Activated CD4-positive, alpha-beta T cell treated with anti-CD3 and anti-CD28 coated beads for 36 hours (primary cell): ENCODE measurements at regions of chr11 and their contacts with region 1.

Region 1: DNA sequence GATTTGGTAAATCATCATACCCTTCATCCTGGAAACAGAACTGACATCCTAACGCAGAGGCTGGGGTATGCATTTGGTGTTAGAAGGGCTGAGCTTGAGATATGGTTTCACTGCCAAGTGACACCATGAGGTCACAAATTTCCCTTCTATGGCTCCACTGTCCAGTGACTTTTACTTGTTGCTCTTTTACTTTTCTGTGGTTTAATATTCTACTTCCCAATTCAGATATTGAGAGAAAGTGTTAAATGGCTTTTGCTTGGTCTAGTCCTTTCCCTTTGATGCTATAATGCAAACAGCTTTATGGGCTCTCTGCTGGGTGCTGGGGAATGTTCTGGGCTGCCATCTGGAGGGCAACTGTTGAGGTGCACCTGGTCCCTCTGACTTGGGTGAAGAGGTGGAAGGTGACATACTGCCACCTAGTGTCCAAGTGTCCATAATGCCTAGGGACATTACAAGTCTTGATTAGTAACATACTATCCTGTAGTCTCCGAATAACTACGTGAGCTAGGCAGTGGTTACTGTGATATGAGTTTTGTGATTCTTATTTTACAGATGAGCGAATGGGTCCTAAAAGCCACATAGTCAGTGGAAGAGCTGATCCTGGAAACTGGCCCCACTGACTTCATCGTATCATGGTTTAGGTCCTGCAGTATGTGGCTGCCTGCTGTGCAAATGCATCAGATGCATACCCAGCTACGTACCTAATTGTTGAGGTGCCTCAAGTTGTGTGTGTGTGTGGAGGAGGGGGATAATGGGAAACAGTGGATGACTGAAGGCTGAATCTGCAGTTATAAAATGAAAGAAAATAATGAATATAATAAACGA is 149.1 kb upstream of the RAG2 start:
- DNase-seq: peak; percentile 90
- ATAC-seq: peak; percentile 99
- H3K4me3 Mint-ChIP-seq: no peak overlapping the region
- H3K27ac Mint-ChIP-seq: no peak overlapping the region
- H3K4me1 Mint-ChIP-seq: peaks cover 8% of the 10 kb centered on the region
- H3K27me3 Mint-ChIP-seq: peaks cover 27% of the 10 kb centered on the region

Region 2: DNA sequence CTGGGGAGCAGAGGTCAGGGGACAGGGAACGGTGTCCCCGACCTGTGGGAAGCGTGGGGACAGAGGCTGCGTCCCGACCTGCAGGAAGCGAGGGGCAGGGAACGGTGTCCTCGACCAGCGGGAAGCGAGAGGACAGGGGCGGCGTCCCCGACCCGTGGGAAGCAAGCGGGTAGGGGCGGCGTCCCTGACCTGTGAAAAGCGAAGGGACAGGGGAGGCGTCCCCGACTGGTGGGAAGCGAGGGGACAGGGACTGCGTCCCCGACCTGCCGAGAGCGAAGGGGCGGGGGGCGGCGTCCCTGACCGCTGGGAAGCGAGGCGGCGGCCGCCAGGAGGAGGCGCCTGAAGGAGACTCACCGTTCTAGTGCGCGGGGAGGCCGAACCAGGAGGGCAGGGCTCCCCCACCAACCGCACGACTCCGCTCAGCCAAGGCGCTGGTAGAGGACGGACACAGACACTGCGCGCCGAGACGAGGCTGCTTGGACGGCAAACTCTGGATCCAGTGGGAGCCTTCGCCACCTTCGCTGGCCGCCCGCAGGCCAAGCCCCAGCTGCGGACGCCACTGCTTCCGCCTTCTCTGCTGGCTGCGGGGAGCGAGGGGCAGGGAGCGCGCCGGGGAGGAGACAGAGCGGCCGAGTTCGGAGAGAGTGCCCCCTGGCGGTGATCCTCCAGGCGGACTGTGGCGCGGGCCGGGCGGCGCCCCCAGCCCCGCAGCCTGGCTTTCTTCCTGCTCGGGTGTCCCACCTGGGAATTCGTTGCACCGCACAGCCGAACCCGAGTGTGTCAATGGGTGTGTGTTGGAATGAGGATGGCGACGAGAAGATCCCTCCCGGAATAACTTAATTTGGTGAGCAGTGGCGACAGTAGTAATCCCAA is 237.2 kb before region 1 on chr11 and contains the start of gene TRAF6:
- CTCF ChIA-PET with region 1: interaction called, 3 read pairs
- POLR2A ChIA-PET with region 1: no interaction called
- intact Hi-C with region 1: loop called in 1 of 2 experiments (anchors 1 kb)
- DNase-seq: peak; percentile 95
- ATAC-seq: peak; percentile 95
- H3K4me3 Mint-ChIP-seq: peak within 1 kb of the TSS; percentile 95
- H3K27ac Mint-ChIP-seq: peak within 1 kb of the TSS; percentile 88
- H3K4me1 Mint-ChIP-seq: peaks cover 32% of the 10 kb centered on the region
- H3K27me3 Mint-ChIP-seq: peaks cover 5% of the 10 kb centered on the region
- total RNA-seq, gene TRAF6: 11.1 to 12.5 TPM

Region 3: DNA sequence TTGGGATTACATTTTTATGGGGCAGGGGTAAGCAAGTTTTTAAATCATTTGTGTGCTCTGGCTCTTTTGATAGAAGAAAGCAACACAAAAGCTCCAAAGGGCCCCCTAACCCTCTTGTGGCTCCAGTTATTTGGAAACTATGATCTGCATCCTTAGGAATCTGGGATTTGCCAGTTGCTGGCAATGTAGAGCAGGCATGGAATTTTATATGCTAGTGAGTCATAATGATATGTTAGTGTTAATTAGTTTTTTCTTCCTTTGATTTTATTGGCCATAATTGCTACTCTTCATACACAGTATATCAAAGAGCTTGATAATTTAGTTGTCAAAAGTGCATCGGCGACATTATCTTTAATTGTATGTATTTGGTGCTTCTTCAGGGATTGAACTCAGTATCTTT is 169.2 kb before region 1 on chr11:
- CTCF ChIA-PET with region 1: interaction called, 15 read pairs
- POLR2A ChIA-PET with region 1: no interaction called
- intact Hi-C with region 1: no loop called
- DNase-seq: no peak
- ATAC-seq: no peak
- H3K4me3 Mint-ChIP-seq: no peak overlapping the region
- H3K27ac Mint-ChIP-seq: no peak overlapping the region
- H3K4me1 Mint-ChIP-seq: no peaks in the 10 kb centered on the region
- H3K27me3 Mint-ChIP-seq: peaks cover 4% of the 10 kb centered on the region

Region 4: DNA sequence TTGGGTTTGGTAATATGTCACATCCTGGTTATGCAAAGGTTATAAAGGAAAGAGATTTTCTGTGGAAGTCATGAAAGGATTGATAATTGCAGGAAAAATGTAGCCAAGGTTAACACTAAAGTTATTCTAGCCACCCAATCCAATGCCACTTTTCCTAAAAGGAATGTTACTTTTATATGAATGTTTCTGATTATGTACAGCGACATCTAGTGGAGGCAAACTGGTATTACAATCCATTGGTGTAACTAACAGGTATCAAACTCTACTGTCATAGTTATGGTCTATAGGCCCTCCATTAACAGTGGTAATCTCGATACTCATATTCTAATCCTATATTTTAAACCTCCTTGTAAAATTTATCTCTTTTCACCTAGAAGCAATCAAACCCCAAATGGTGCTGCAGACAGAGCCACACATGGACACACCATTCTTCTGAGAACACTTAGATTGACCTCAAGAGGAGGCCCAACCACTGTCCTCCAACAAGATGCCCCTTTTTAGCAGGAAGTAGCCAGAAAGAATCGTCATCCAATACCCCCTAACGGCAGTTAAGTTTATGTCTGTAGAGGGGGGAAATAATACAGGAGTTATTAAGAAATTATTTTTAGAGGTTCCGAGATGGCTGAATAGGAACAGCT is 74.2 kb before region 1 on chr11:
- CTCF ChIA-PET with region 1: interaction called, 13 read pairs
- POLR2A ChIA-PET with region 1: no interaction called
- intact Hi-C with region 1: loop called in 1 of 2 experiments (anchors 2 kb)
- DNase-seq: no peak
- ATAC-seq: no peak
- H3K4me3 Mint-ChIP-seq: no peak overlapping the region
- H3K27ac Mint-ChIP-seq: no peak overlapping the region
- H3K4me1 Mint-ChIP-seq: no peaks in the 10 kb centered on the region
- H3K27me3 Mint-ChIP-seq: peaks cover 24% of the 10 kb centered on the region

Region 5: DNA sequence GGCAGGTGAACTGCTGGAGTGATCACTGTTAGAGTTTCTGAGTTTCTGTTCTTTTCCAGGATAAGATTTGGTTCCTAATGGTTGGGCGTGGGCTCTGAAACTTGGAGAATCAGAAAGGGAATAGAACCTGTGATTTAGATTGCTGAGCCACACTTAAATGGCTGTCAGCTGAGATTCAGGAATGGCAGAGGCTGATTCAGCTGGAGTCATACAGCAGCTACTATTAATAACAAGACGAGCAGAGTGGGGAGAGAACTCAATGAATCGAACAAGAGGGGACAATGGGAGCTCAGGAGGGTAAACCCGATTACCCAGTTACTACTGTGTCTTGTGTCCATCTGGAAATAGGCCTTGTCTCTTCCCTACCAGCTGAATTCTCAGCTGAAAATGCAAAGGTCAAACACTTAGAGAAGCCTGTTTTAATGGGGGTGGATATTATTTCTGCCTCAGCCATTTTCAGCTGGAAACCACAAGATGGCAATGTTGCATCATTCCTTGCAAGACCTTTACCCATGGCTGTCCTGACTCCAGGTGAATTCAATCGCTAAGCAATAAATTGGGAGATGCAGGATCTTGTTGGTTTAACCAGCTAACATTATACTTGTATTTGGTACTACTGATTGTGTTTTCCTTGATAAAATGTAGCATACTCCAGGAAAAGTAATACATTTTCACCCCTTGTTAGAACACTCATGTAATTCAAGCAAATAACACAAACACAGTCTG is 44.6 kb before region 1 on chr11:
- CTCF ChIA-PET with region 1: interaction called, 88 read pairs
- POLR2A ChIA-PET with region 1: no interaction called
- intact Hi-C with region 1: loop called (anchors 1 kb)
- DNase-seq: peak; percentile 10
- ATAC-seq: peak; percentile 51
- H3K4me3 Mint-ChIP-seq: no peak overlapping the region
- H3K27ac Mint-ChIP-seq: no peak overlapping the region
- H3K4me1 Mint-ChIP-seq: peaks cover 5% of the 10 kb centered on the region
- H3K27me3 Mint-ChIP-seq: peaks cover 21% of the 10 kb centered on the region

Region 6: DNA sequence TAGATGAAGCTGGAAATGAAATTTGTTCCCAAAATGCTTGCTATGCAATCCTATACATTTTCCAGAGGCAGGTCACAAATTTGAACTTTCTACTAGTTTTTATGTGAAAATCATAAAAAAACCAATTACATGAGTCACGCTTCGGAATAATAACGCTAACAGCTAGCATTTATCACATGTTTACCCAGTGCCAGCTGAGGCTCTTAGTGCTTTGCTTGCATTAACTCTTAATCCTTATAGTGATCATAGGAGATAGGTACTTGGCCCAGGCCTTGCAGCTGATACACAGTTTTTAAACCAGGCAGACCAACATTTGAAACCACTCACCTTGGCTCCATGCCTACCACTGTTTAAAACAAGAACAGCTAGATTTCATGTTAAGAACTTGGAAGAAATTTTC is 17.3 kb before region 1 on chr11:
- CTCF ChIA-PET with region 1: interaction called, 68 read pairs
- POLR2A ChIA-PET with region 1: no interaction called
- intact Hi-C with region 1: no loop called
- DNase-seq: no peak
- ATAC-seq: no peak
- H3K4me3 Mint-ChIP-seq: no peak overlapping the region
- H3K27ac Mint-ChIP-seq: no peak overlapping the region
- H3K4me1 Mint-ChIP-seq: no peaks in the 10 kb centered on the region
- H3K27me3 Mint-ChIP-seq: peaks cover 4% of the 10 kb centered on the region

Region 7: GRCh38 chr11:36763187-36763586 is 16.1 kb after region 1 on chr11:
- CTCF ChIA-PET with region 1: interaction called, 19 read pairs
- POLR2A ChIA-PET with region 1: no interaction called
- intact Hi-C with region 1: no loop called
- DNase-seq: peak; percentile 16
- ATAC-seq: peak; percentile 36
- H3K4me3 Mint-ChIP-seq: no peak overlapping the region
- H3K27ac Mint-ChIP-seq: no peak overlapping the region
- H3K4me1 Mint-ChIP-seq: peaks cover 3% of the 10 kb centered on the region
- H3K27me3 Mint-ChIP-seq: peaks cover 2% of the 10 kb centered on the region